CD8-positive, alpha-beta T cell (primary cell): ENCODE measurements at regions of chr11 and their contacts with region 1.

Region 1: GRCh38 chr11:30128269-30128932 is 102.4 kb upstream of the FSHB start:
- DNase-seq: peak in 2 of 9 experiments; percentile 8 to 9
- ATAC-seq: no peak
- H3K4me3 ChIP-seq: no peak overlapping the region
- H3K4me3 Mint-ChIP-seq: no peak overlapping the region
- H3K27ac ChIP-seq: no peak overlapping the region
- H3K27ac Mint-ChIP-seq: no peak overlapping the region
- H3K4me1 ChIP-seq: no peaks in the 10 kb centered on the region
- H3K4me1 Mint-ChIP-seq: no peaks in the 10 kb centered on the region
- H3K27me3 ChIP-seq: no peaks in the 10 kb centered on the region
- H3K27me3 Mint-ChIP-seq: peaks cover 2% of the 10 kb centered on the region
- CTCF ChIP-seq: no peak

Region 2: DNA sequence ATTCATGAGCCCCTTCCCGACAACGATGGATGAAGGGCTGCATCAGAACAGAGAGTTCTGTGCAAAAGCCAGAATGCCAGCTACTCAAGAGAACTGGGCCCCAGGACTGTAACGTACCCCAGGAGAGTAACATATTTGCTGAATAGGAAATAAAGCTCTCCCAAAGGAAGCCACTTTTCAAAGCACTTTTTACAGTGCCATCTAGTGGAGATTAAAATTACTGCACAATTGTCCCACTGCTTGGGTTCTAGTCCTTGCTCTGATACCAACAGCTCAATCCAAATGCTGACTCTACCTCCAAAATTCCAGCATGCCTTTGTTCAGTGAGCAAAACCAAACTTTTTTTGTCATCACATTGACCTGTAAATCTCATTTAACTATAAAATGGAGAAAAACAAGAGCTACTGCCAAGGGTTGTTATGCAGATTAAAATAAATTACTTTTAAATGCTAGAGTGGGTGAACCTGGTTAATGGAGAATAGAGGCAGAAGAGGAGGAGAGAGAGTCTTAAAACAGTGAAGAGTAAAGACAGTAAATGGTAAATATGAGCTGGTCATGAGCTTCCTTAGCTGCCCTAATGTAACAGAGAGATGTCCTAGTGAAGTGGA is 14.8 kb after region 1 on chr11:
- CTCF ChIA-PET with region 1: interaction called, 25 read pairs
- POLR2A ChIA-PET with region 1: no interaction called
- intact Hi-C with region 1: no loop called
- DNase-seq: peak in 2 of 9 experiments; percentile 18
- ATAC-seq: no peak
- H3K4me3 ChIP-seq: no peak overlapping the region
- H3K4me3 Mint-ChIP-seq: no peak overlapping the region
- H3K27ac ChIP-seq: no peak overlapping the region
- H3K27ac Mint-ChIP-seq: no peak overlapping the region
- H3K4me1 ChIP-seq: no peaks in the 10 kb centered on the region
- H3K4me1 Mint-ChIP-seq: no peaks in the 10 kb centered on the region
- H3K27me3 ChIP-seq: no peaks in the 10 kb centered on the region
- H3K27me3 Mint-ChIP-seq: peaks cover 9% of the 10 kb centered on the region
- CTCF ChIP-seq: peak; percentile 71

Region 3: DNA sequence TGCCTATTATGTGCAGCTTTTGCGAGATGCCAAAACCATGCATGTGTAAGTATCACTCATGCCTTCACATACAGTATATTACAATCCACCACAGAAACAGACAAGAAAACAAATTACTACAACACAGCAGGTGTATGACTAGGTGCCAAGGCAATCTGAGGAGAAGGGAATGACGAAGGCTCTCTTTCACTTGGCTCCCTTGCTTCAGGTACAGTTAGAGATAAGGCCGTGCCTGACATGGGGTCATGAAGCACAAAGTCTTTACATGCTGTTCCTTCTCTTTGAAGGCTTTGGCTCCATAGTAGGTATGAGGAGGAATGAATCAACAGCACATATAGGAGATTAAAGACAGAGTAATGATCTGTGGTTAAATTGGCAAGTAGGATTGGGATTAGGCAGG is 37.3 kb after region 1 on chr11:
- CTCF ChIA-PET with region 1: no interaction called
- POLR2A ChIA-PET with region 1: no interaction called
- intact Hi-C with region 1: no loop called
- DNase-seq: no peak
- ATAC-seq: no peak
- H3K4me3 ChIP-seq: no peak overlapping the region
- H3K4me3 Mint-ChIP-seq: no peak overlapping the region
- H3K27ac ChIP-seq: no peak overlapping the region
- H3K27ac Mint-ChIP-seq: no peak overlapping the region
- H3K4me1 ChIP-seq: no peaks in the 10 kb centered on the region
- H3K4me1 Mint-ChIP-seq: no peaks in the 10 kb centered on the region
- H3K27me3 ChIP-seq: no peaks in the 10 kb centered on the region
- H3K27me3 Mint-ChIP-seq: peaks cover 4% of the 10 kb centered on the region
- CTCF ChIP-seq: no peak

Region 4: DNA sequence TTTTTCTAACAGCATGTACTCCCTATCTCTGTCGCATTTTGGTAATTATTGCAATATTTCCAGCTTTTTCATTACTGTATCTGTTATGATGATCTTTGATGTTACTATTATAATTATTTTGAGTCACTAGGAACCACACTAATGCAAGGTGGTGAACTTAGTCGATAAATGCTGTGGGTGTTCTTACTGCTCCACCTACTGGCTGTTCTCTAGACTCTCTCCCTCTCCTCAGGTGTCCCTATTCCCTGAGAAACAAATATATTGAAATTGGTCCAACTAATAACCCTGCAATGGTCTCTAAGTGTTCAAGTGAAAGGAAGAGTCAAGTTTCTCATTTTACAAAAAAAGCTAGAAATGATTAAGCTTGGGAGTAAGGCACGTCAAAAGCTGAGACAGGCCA is 205.0 kb after region 1 on chr11:
- CTCF ChIA-PET with region 1: no interaction called
- POLR2A ChIA-PET with region 1: no interaction called
- intact Hi-C with region 1: loop called in 1 of 2 experiments (anchors 10 kb)
- DNase-seq: peak in 1 of 9 experiments; percentile 32
- ATAC-seq: no peak
- H3K4me3 ChIP-seq: no peak overlapping the region
- H3K4me3 Mint-ChIP-seq: no peak overlapping the region
- H3K27ac ChIP-seq: no peak overlapping the region
- H3K27ac Mint-ChIP-seq: peak overlapping the region; percentile 1
- H3K4me1 ChIP-seq: peaks cover 5% of the 10 kb centered on the region
- H3K4me1 Mint-ChIP-seq: peaks cover 44% of the 10 kb centered on the region
- H3K27me3 ChIP-seq: no peaks in the 10 kb centered on the region
- H3K27me3 Mint-ChIP-seq: no peaks in the 10 kb centered on the region
- CTCF ChIP-seq: peak; percentile 33

Region 5: GRCh38 chr11:30445056-30445455 is 316.7 kb after region 1 on chr11:
- CTCF ChIA-PET with region 1: no interaction called
- POLR2A ChIA-PET with region 1: no interaction called
- intact Hi-C with region 1: no loop called
- DNase-seq: no peak
- ATAC-seq: no peak
- H3K4me3 ChIP-seq: no peak overlapping the region
- H3K4me3 Mint-ChIP-seq: no peak overlapping the region
- H3K27ac ChIP-seq: no peak overlapping the region
- H3K27ac Mint-ChIP-seq: no peak overlapping the region
- H3K4me1 ChIP-seq: no peaks in the 10 kb centered on the region
- H3K4me1 Mint-ChIP-seq: no peaks in the 10 kb centered on the region
- H3K27me3 ChIP-seq: no peaks in the 10 kb centered on the region
- H3K27me3 Mint-ChIP-seq: peaks cover 2% of the 10 kb centered on the region
- CTCF ChIP-seq: no peak